ENCODE measurements at regions of chr6 and their contacts with region 1.

Region 1: GRCh38 chr6:52284460-52285176 is at the start of gene MCM3:
- DNase-seq: peak; percentile 97 to 98
- ATAC-seq: peak; percentile 100
- H3K4me3 ChIP-seq: peak within 1 kb of the TSS; percentile 59 to 63
- H3K27ac ChIP-seq: peak within 1 kb of the TSS in 1 of 2 donors; percentile 5
- H3K4me1 ChIP-seq: peaks cover 2 to 4% of the 10 kb centered on the region in 2 donors
- H3K27me3 ChIP-seq: no peaks in the 10 kb centered on the region
- total RNA-seq, gene MCM3: 24.5 to 30.5 TPM

Region 2: GRCh38 chr6:52361945-52362442 is 77.4 kb after region 1 on chr6 and contains the start of gene PAQR8:
- intact Hi-C with region 1: loop called in 1 of 2 experiments (anchors 2 kb)
- DNase-seq: peak; percentile 89 to 90
- ATAC-seq: peak; percentile 94
- H3K4me3 ChIP-seq: peak within 1 kb of the TSS; percentile 72 to 86
- H3K27ac ChIP-seq: no peak within 1 kb of the TSS
- H3K4me1 ChIP-seq: no peaks in the 10 kb centered on the region
- H3K27me3 ChIP-seq: no peaks in the 10 kb centered on the region
- total RNA-seq, gene PAQR8: 2.5 to 6.5 TPM

Region 3: GRCh38 chr6:52399511-52400312 is 115.1 kb after region 1 on chr6:
- intact Hi-C with region 1: loop called (anchors 2 to 5 kb)
- DNase-seq: no peak
- ATAC-seq: peak; percentile 68
- H3K4me3 ChIP-seq: no peak overlapping the region
- H3K27ac ChIP-seq: no peak overlapping the region
- H3K4me1 ChIP-seq: no peaks in the 10 kb centered on the region
- H3K27me3 ChIP-seq: no peaks in the 10 kb centered on the region